GM12878 (cell line): ENCODE measurements at regions of chr17 and their contacts with region 1.

Region 1: DNA sequence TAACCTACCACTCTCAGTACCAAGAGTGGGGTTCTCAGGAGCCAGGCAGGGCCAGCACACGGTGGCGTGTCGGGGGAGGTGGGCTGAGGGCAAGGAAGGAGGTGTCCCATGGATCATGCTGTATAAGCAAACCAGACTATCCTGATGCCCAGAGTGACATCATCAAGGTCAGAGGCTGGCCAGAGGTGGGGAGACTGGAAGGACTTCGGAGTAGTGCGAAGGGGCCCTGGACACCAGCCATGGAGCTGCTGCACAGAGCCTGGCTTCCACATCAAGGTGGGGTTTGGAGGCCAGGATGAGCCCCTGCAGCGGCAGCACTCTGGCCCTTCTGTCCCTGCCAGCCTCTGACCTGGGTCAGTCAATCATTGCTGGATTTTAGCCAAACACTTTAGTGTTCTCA is 34.9 kb downstream of the MED13 start:
- DNase-seq: no peak
- ATAC-seq: no peak
- H3K4me3 ChIP-seq: no peak overlapping the region
- H3K27ac ChIP-seq: no peak overlapping the region
- H3K4me1 ChIP-seq: no peaks in the 10 kb centered on the region
- H3K27me3 ChIP-seq: no peaks in the 10 kb centered on the region
- CTCF ChIP-seq: no peak
- EP300 ChIP-seq: no peak
- POLR2A ChIP-seq: no peak; the same call in 1 of the 2 replicates
- RAD21 ChIP-seq: no peak

Region 2: DNA sequence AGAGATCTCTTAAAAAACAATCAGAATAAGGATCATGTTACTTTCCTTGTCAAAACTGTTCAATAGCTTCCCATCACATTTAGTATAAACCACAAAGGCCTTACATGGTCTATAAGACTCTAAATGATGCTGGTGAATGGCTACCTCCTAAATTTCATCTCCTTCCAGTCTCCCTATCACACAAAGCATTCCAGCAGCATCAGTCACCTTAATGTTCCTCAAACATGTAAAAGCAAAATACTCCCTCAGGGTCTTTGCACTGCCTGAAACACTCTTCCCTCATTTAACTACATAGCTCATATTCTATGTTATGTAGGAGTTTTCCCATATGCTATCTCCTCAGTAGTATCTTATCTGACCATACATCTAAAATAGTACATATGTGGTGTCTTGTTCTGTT is 48.9 kb before region 1 on chr17:
- CTCF ChIA-PET with region 1: no interaction called
- POLR2A ChIA-PET with region 1: no interaction called
- RAD21 ChIA-PET with region 1: no interaction called
- SMC1A ChIA-PET with region 1: no interaction called
- in situ Hi-C with region 1: loop called (anchors 5 kb)
- intact Hi-C with region 1: no loop called
- DNase-seq: no peak
- ATAC-seq: no peak
- H3K4me3 ChIP-seq: no peak overlapping the region
- H3K27ac ChIP-seq: no peak overlapping the region
- H3K4me1 ChIP-seq: no peaks in the 10 kb centered on the region
- H3K27me3 ChIP-seq: no peaks in the 10 kb centered on the region
- CTCF ChIP-seq: no peak
- EP300 ChIP-seq: no peak
- POLR2A ChIP-seq: no peak
- RAD21 ChIP-seq: no peak

Region 3: DNA sequence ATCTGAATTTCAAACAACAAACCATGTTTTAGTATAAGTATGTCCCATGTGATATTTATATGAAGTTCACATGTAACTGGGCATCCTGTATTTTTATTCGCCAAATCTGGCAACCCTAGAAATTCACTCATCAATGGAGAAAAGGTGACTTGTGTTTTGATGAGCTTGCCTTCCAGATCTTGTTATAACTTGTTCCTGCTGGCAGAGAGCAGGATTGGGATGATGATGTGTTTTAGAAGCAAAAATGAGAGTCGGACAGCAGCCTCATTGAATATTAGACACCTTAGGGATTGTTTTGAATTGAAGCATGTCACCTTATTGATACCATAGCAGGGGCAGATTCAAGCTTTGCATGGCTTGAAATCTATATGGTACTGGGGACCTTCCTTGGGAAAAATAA is 120.3 kb after region 1 on chr17:
- CTCF ChIA-PET with region 1: no interaction called
- POLR2A ChIA-PET with region 1: no interaction called
- RAD21 ChIA-PET with region 1: no interaction called
- SMC1A ChIA-PET with region 1: no interaction called
- in situ Hi-C with region 1: no loop called
- intact Hi-C with region 1: no loop called
- DNase-seq: no peak
- ATAC-seq: no peak
- H3K4me3 ChIP-seq: no peak overlapping the region
- H3K27ac ChIP-seq: no peak overlapping the region
- H3K4me1 ChIP-seq: no peaks in the 10 kb centered on the region
- H3K27me3 ChIP-seq: no peaks in the 10 kb centered on the region
- CTCF ChIP-seq: no peak
- EP300 ChIP-seq: no peak
- POLR2A ChIP-seq: no peak
- RAD21 ChIP-seq: no peak